ENCODE measurements at regions of chr11 and their contacts with region 1.

Region 1: DNA sequence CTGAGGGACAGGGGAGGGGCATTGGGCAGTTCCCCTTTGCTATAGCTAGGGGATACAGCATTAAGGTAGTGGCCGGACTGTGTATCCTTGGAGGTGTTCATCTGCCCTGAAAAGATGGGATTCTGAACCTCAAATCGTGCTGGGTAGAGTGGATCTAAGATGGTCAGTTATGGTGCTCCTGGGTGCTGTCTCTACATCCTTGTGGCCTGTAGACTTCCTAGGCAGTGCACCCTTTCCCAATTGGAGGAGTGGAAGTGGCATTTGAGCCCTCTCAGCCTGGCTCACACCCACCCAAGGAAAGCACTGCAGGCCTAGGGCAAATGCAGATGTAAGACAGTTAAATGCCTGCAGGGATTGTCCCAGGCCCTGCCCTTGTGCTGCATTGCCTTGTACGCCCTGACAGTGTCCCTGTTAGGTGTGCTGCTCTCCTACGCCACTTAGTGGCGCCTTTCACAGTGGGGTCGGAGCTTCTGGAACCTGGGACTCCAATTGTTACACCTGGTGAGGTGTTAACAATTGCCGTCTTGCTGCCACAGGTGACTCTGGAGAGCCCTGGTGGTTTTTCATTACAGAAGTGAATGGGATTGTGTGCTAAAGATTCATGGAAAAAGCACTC is 35.0 kb downstream of the PPFIBP2 start:
- DNase-seq: peak; percentile 70 to 72
- H3K4me3 ChIP-seq: no peak overlapping the region
- H3K4me3 Mint-ChIP-seq: no peak overlapping the region
- H3K27ac Mint-ChIP-seq: no peak overlapping the region
- H3K4me1 ChIP-seq: peaks cover 13% of the 10 kb centered on the region
- H3K4me1 Mint-ChIP-seq: peaks cover 18% of the 10 kb centered on the region
- H3K27me3 ChIP-seq: no peaks in the 10 kb centered on the region
- H3K27me3 Mint-ChIP-seq: no peaks in the 10 kb centered on the region
- CTCF ChIP-seq: peak; percentile 62 to 86

Region 2: DNA sequence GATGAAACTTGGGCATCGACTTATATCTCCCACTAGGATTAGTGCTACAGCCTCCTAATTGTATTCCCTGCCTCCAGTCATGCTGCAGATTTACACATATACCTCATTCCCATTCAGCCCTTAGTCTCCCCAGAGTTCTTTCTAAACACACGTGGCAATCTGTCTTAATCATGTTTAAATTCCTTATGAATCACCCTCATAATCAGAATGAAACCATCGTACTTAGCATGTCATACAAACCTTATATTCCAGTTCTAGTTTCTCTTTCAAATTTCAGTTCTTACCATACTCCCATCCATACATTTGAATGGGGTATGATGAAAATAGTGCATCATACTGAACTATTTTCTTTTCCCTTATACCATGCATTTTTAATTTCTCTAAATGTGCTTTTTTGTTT is 691.9 kb before region 1 on chr11:
- CTCF ChIA-PET with region 1: no interaction called
- POLR2A ChIA-PET with region 1: no interaction called
- intact Hi-C with region 1: no loop called
- DNase-seq: no peak
- H3K4me3 ChIP-seq: no peak overlapping the region
- H3K4me3 Mint-ChIP-seq: no peak overlapping the region
- H3K27ac Mint-ChIP-seq: no peak overlapping the region
- H3K4me1 ChIP-seq: no peaks in the 10 kb centered on the region
- H3K4me1 Mint-ChIP-seq: no peaks in the 10 kb centered on the region
- H3K27me3 ChIP-seq: no peaks in the 10 kb centered on the region
- H3K27me3 Mint-ChIP-seq: peaks cover 9% of the 10 kb centered on the region
- CTCF ChIP-seq: no peak

Region 3: GRCh38 chr11:7665473-7666291 is 116.9 kb after region 1 on chr11:
- CTCF ChIA-PET with region 1: interaction called, 13 read pairs
- POLR2A ChIA-PET with region 1: no interaction called
- intact Hi-C with region 1: no loop called
- DNase-seq: peak; percentile 87 to 90
- H3K4me3 ChIP-seq: no peak overlapping the region
- H3K4me3 Mint-ChIP-seq: no peak overlapping the region
- H3K27ac Mint-ChIP-seq: peak overlapping the region; percentile 11
- H3K4me1 ChIP-seq: no peaks in the 10 kb centered on the region
- H3K4me1 Mint-ChIP-seq: peaks cover 12% of the 10 kb centered on the region
- H3K27me3 ChIP-seq: no peaks in the 10 kb centered on the region
- H3K27me3 Mint-ChIP-seq: no peaks in the 10 kb centered on the region
- CTCF ChIP-seq: peak; percentile 92 to 94